Breast epithelium (tissue), 4 donors: ENCODE measurements at regions of chr3 and their contacts with region 1.

Region 1: GRCh38 chr3:115082260-115082659 is 64.8 kb downstream of the ZBTB20 start:
- DNase-seq: no peak
- H3K4me3 ChIP-seq: no peak overlapping the region
- H3K27ac ChIP-seq: no peak overlapping the region
- H3K4me1 ChIP-seq: peaks cover 0 to 5% of the 10 kb centered on the region in 2 donors
- H3K27me3 ChIP-seq: no peaks in the 10 kb centered on the region
- CTCF ChIP-seq: no peak
- POLR2A ChIP-seq: no peak

Region 2: GRCh38 chr3:115038828-115039227 is 43.4 kb before region 1 on chr3:
- intact Hi-C with region 1: loop called (anchors 2 kb)
- DNase-seq: no peak
- H3K4me3 ChIP-seq: no peak overlapping the region
- H3K27ac ChIP-seq: no peak overlapping the region
- H3K4me1 ChIP-seq: no peaks in the 10 kb centered on the region
- H3K27me3 ChIP-seq: no peaks in the 10 kb centered on the region
- CTCF ChIP-seq: no peak
- POLR2A ChIP-seq: no peak